CD4-positive, alpha-beta T cell (primary cell): ENCODE measurements at regions of chr5 and their contacts with region 1.

Region 1: GRCh38 chr5:50440651-50441492 is at the start of gene EMB:
- DNase-seq: peak; percentile 69 to 92 (median 78)
- ATAC-seq: peak; percentile 69
- H3K4me3 ChIP-seq: peak within 1 kb of the TSS; percentile 67
- H3K4me3 Mint-ChIP-seq: peak within 1 kb of the TSS; percentile 95
- H3K27ac ChIP-seq: peak within 1 kb of the TSS; percentile 89 to 95
- H3K27ac Mint-ChIP-seq: peak within 1 kb of the TSS; percentile 99
- H3K4me1 ChIP-seq: peaks cover 41% of the 10 kb centered on the region
- H3K4me1 Mint-ChIP-seq: peaks cover 90% of the 10 kb centered on the region
- H3K27me3 ChIP-seq: no peaks in the 10 kb centered on the region
- H3K27me3 Mint-ChIP-seq: no peaks in the 10 kb centered on the region
- CTCF ChIP-seq: peak; percentile 64
- total RNA-seq, gene EMB: 131 to 133 TPM

Region 2: GRCh38 chr5:50415912-50416311 is 25.0 kb before region 1 on chr5:
- CTCF ChIA-PET with region 1: interaction called, 9 read pairs
- POLR2A ChIA-PET with region 1: interaction called, 28 read pairs
- intact Hi-C with region 1: loop called in 1 of 2 experiments (anchors 2 kb)
- DNase-seq: peak in 8 of 14 experiments; percentile 4 to 79 (median 31)
- ATAC-seq: peak; percentile 85
- H3K4me3 ChIP-seq: no peak overlapping the region
- H3K4me3 Mint-ChIP-seq: peak overlapping the region; percentile 76
- H3K27ac ChIP-seq: peak overlapping the region in 1 of 2 donors; percentile 64
- H3K27ac Mint-ChIP-seq: peak overlapping the region; percentile 92
- H3K4me1 ChIP-seq: peaks cover 36% of the 10 kb centered on the region
- H3K4me1 Mint-ChIP-seq: peaks cover 96% of the 10 kb centered on the region
- H3K27me3 ChIP-seq: no peaks in the 10 kb centered on the region
- H3K27me3 Mint-ChIP-seq: no peaks in the 10 kb centered on the region
- CTCF ChIP-seq: no peak

Region 3: GRCh38 chr5:50463047-50463446 is 22.2 kb after region 1 on chr5:
- CTCF ChIA-PET with region 1: interaction called, 3 read pairs
- POLR2A ChIA-PET with region 1: interaction called, 3 read pairs
- intact Hi-C with region 1: loop called in 1 of 2 experiments (anchors 2 kb)
- DNase-seq: no peak
- ATAC-seq: no peak
- H3K4me3 ChIP-seq: no peak overlapping the region
- H3K4me3 Mint-ChIP-seq: no peak overlapping the region
- H3K27ac ChIP-seq: no peak overlapping the region
- H3K27ac Mint-ChIP-seq: no peak overlapping the region
- H3K4me1 ChIP-seq: peaks cover 8% of the 10 kb centered on the region
- H3K4me1 Mint-ChIP-seq: peaks cover 13% of the 10 kb centered on the region
- H3K27me3 ChIP-seq: no peaks in the 10 kb centered on the region
- H3K27me3 Mint-ChIP-seq: no peaks in the 10 kb centered on the region
- CTCF ChIP-seq: no peak

Region 4: DNA sequence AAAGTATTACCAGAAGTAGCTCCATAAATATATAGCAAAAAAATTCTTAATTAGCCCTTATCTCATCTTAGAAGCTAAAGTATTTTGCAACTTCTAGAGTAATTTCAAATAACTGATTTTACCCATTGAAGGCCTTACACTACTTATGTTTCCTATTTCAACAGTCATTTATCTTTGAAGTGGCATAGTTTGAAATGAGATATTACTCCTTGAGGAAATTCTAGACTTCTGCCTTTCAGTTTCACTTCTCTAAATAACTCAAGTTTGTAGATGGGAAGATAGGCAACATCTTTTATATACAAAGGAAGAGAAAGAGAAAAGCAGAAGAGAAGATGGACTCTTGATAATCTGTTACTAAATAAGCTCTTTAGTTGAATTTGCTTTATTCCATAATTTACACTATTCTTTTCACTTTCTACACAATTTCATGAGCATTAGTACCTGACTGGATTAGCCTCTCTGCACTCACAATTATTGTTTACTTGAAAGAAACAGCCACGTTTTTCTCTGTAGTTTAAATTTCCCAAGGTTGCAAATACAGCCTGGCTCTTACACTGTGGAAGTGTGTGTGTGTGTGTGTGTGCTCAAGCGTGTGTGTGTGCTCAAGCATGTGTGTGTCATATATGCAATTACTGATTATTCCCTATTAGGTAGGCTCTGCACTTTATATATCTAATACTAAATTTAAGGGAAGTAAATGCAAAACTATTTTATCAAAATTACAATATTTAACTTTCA is 60.8 kb after region 1 on chr5:
- CTCF ChIA-PET with region 1: no interaction called
- POLR2A ChIA-PET with region 1: interaction called, 4 read pairs
- intact Hi-C with region 1: loop called in 1 of 2 experiments (anchors 5 kb)
- DNase-seq: peak in 4 of 14 experiments; percentile 5 to 57 (median 42)
- ATAC-seq: no peak
- H3K4me3 ChIP-seq: no peak overlapping the region
- H3K4me3 Mint-ChIP-seq: peak overlapping the region; percentile 63
- H3K27ac ChIP-seq: peak overlapping the region in 1 of 2 donors; percentile 19
- H3K27ac Mint-ChIP-seq: peak overlapping the region; percentile 67
- H3K4me1 ChIP-seq: peaks cover 3% of the 10 kb centered on the region
- H3K4me1 Mint-ChIP-seq: peaks cover 26% of the 10 kb centered on the region
- H3K27me3 ChIP-seq: no peaks in the 10 kb centered on the region
- H3K27me3 Mint-ChIP-seq: no peaks in the 10 kb centered on the region
- CTCF ChIP-seq: no peak

Region 5: DNA sequence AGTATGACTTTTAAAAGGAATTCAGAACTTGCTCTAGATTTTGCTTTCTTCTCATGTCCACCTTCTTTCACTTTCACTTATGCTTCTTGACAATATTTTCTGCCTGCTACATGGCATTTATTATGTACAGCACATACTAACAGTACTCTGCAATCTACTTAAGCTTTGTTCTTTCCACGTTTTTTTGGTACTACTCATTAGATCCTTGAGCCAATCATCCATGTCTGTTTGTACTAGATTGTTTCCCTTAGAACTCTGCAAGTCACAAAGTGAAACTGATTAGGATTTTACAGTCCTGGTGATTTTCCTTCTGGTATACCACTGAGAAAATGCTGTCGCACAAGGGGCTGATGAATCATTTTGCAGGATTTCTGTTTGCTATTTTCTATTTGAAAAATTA is 303.9 kb after region 1 on chr5:
- CTCF ChIA-PET with region 1: interaction called, 5 read pairs
- POLR2A ChIA-PET with region 1: interaction called, 30 read pairs
- intact Hi-C with region 1: loop called in 1 of 2 experiments (anchors 5 kb)
- DNase-seq: peak in 3 of 14 experiments; percentile 38 to 64 (median 46)
- ATAC-seq: peak; percentile 46
- H3K4me3 ChIP-seq: peak overlapping the region; percentile 46
- H3K4me3 Mint-ChIP-seq: peak overlapping the region; percentile 83
- H3K27ac ChIP-seq: peak overlapping the region; percentile 68 to 71
- H3K27ac Mint-ChIP-seq: peak overlapping the region; percentile 90
- H3K4me1 ChIP-seq: peaks cover 27% of the 10 kb centered on the region
- H3K4me1 Mint-ChIP-seq: peaks cover 77% of the 10 kb centered on the region
- H3K27me3 ChIP-seq: no peaks in the 10 kb centered on the region
- H3K27me3 Mint-ChIP-seq: no peaks in the 10 kb centered on the region
- CTCF ChIP-seq: no peak

Region 6: GRCh38 chr5:50751064-50751657 is 310.3 kb after region 1 on chr5:
- CTCF ChIA-PET with region 1: interaction called, 10 read pairs
- POLR2A ChIA-PET with region 1: interaction called, 30 read pairs
- intact Hi-C with region 1: loop called (anchors 2 to 5 kb)
- DNase-seq: peak in 9 of 14 experiments; percentile 10 to 85 (median 39)
- ATAC-seq: peak; percentile 91
- H3K4me3 ChIP-seq: no peak overlapping the region
- H3K4me3 Mint-ChIP-seq: peak overlapping the region; percentile 77
- H3K27ac ChIP-seq: no peak overlapping the region
- H3K27ac Mint-ChIP-seq: peak overlapping the region; percentile 90
- H3K4me1 ChIP-seq: peaks cover 4% of the 10 kb centered on the region
- H3K4me1 Mint-ChIP-seq: peaks cover 61% of the 10 kb centered on the region
- H3K27me3 ChIP-seq: no peaks in the 10 kb centered on the region
- H3K27me3 Mint-ChIP-seq: no peaks in the 10 kb centered on the region
- CTCF ChIP-seq: peak; percentile 90